ENCODE measurements at regions of chr1 and their contacts with region 1.

Region 1: GRCh38 chr1:112496290-112496689 is 12.5 kb upstream of the WNT2B start:
- DNase-seq: no peak
- H3K4me3 ChIP-seq: no peak overlapping the region
- H3K27ac ChIP-seq: no peak overlapping the region
- H3K4me1 ChIP-seq: no peaks in the 10 kb centered on the region
- H3K27me3 ChIP-seq: no peaks in the 10 kb centered on the region
- CTCF ChIP-seq: no peak

Region 2: GRCh38 chr1:112540226-112540794 is 44.0 kb after region 1 on chr1:
- CTCF ChIA-PET with region 1: no interaction called
- POLR2A ChIA-PET with region 1: interaction called, 11 read pairs
- intact Hi-C with region 1: no loop called
- DNase-seq: no peak
- H3K4me3 ChIP-seq: no peak overlapping the region
- H3K27ac ChIP-seq: no peak overlapping the region
- H3K4me1 ChIP-seq: no peaks in the 10 kb centered on the region
- H3K27me3 ChIP-seq: no peaks in the 10 kb centered on the region
- CTCF ChIP-seq: no peak